Activated naive CD4-positive, alpha-beta T cell treated with anti-CD3 and anti-CD28 coated beads for 36 hours (primary cell): ENCODE measurements at regions of chr17 and their contacts with region 1.

Region 1: GRCh38 chr17:48024937-48025906 is 12.4 kb downstream of the COPZ2 start:
- DNase-seq: peak; percentile 98
- H3K4me3 Mint-ChIP-seq: peak overlapping the region; percentile 81
- H3K27ac Mint-ChIP-seq: no peak overlapping the region
- H3K4me1 Mint-ChIP-seq: peaks cover 23% of the 10 kb centered on the region
- H3K27me3 Mint-ChIP-seq: peaks cover 19% of the 10 kb centered on the region

Region 2: DNA sequence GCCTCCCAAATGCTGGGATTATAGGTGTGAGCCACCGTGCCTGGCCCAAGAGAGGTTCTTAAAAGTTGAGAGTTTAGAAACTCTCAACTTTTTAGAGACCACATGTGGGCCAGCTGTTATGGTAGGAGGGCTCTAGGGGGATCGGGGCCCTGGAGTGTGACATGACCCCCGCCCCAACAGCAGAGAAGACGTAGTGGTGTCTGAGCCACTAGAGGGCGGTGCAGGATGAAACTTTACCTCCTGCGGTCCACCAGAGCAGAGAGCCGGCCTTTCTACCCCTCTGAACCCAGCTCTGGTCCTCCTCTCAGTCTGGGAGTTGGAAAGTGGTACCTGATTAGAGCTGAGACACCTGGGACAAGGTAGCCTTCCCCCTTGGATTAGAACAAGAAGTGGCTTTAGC is 46.9 kb before region 1 on chr17:
- CTCF ChIA-PET with region 1: interaction called, 10 read pairs
- intact Hi-C with region 1: loop called (anchors 1 kb)
- DNase-seq: peak; percentile 60
- H3K4me3 Mint-ChIP-seq: no peak overlapping the region
- H3K27ac Mint-ChIP-seq: no peak overlapping the region
- H3K4me1 Mint-ChIP-seq: peaks cover 1% of the 10 kb centered on the region
- H3K27me3 Mint-ChIP-seq: no peaks in the 10 kb centered on the region

Region 3: GRCh38 chr17:48037036-48037837 is 12.0 kb after region 1 on chr17 and contains the start of gene COPZ2:
- CTCF ChIA-PET with region 1: interaction called, 37 read pairs
- intact Hi-C with region 1: no loop called
- DNase-seq: peak; percentile 75
- H3K4me3 Mint-ChIP-seq: peak within 1 kb of the TSS; percentile 75
- H3K27ac Mint-ChIP-seq: no peak within 1 kb of the TSS
- H3K4me1 Mint-ChIP-seq: peaks cover 7% of the 10 kb centered on the region
- H3K27me3 Mint-ChIP-seq: peaks cover 32% of the 10 kb centered on the region
- total RNA-seq, gene COPZ2: 2.4 to 3.3 TPM

Region 4: DNA sequence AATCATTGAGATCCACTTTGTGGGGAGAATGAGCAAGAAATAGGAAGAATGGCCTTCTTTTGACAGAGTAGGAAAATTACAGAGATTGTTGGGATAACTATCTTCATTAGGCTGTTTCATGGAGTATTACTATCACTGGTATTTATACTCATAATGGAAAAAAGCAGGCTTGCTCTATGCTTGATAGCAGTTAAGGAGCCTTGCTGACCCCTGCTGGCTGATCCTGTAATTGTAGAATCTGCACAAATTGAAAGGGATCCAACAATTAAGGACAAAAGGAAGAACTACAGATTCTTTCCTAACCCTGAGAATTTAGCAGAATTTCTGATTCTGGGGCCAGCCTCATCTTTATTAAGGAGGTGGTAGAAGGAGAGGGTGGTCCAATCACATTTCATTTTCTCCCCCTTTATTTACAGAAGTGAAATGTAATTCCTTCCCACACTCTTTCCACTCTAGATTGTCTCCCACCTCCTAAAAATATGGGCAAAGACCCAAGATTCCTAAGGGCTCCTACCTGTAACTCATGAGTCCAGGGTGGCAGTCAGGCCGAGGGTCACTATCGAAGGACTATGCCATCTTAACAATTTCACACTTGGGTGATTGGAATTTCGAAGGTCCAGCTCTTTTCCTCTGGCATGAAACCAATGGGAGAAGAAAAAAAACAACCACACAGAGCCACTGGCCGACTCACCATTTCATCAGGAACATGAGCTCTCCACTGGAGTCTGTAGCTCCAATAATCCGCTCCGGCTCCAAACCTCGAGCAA is 49.3 kb after region 1 on chr17:
- CTCF ChIA-PET with region 1: interaction called, 67 read pairs
- intact Hi-C with region 1: loop called (anchors 1 kb)
- DNase-seq: peak; percentile 89
- H3K4me3 Mint-ChIP-seq: no peak overlapping the region
- H3K27ac Mint-ChIP-seq: no peak overlapping the region
- H3K4me1 Mint-ChIP-seq: no peaks in the 10 kb centered on the region
- H3K27me3 Mint-ChIP-seq: no peaks in the 10 kb centered on the region

Region 5: DNA sequence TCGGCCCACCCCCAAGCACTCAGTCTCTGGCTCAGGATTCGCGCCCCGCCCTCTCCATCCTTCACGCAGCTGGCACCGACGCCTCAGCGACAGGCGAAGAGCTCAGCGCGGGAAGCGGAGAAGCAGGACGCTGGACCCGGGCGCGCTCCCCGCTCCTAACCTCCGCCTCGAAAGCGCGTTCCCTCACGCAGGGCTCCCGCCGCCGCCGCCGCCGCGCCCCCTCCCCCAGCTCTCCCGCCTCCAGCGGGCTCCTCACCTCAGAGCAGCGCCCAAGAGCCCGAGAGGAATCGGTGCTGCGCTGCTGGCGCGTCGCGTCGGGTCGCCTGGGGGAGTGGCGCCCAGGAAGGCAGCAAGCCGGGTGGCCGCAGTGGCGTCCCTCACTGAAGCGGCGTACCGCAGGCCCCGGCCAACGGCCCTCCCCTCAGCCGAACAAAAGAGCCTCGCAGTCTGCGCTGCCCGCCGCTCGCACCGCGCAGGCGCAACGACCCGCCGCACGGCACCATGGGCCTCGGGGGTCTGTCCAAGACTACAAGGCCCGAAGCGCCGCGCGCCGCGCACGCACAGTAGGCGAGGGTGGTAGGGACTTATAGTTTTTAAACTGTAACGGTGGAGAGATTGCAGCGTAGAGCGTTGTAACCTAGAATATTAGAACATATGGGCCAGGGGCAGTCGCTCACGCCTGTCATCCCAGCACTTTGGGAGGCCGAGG is 75.9 kb after region 1 on chr17 and contains the start of gene CBX1:
- CTCF ChIA-PET with region 1: interaction called, 15 read pairs
- intact Hi-C with region 1: loop called (anchors 2 kb)
- DNase-seq: peak; percentile 95
- H3K4me3 Mint-ChIP-seq: peak within 1 kb of the TSS; percentile 97
- H3K27ac Mint-ChIP-seq: peak within 1 kb of the TSS; percentile 81
- H3K4me1 Mint-ChIP-seq: peaks cover 34% of the 10 kb centered on the region
- H3K27me3 Mint-ChIP-seq: no peaks in the 10 kb centered on the region
- total RNA-seq, gene CBX1: 61.6 to 63.0 TPM

Region 6: GRCh38 chr17:48314716-48315115 is 289.5 kb after region 1 on chr17:
- CTCF ChIA-PET with region 1: no interaction called
- intact Hi-C with region 1: no loop called
- DNase-seq: no peak
- H3K4me3 Mint-ChIP-seq: no peak overlapping the region
- H3K27ac Mint-ChIP-seq: no peak overlapping the region
- H3K4me1 Mint-ChIP-seq: peaks cover 11% of the 10 kb centered on the region
- H3K27me3 Mint-ChIP-seq: no peaks in the 10 kb centered on the region

Region 7: DNA sequence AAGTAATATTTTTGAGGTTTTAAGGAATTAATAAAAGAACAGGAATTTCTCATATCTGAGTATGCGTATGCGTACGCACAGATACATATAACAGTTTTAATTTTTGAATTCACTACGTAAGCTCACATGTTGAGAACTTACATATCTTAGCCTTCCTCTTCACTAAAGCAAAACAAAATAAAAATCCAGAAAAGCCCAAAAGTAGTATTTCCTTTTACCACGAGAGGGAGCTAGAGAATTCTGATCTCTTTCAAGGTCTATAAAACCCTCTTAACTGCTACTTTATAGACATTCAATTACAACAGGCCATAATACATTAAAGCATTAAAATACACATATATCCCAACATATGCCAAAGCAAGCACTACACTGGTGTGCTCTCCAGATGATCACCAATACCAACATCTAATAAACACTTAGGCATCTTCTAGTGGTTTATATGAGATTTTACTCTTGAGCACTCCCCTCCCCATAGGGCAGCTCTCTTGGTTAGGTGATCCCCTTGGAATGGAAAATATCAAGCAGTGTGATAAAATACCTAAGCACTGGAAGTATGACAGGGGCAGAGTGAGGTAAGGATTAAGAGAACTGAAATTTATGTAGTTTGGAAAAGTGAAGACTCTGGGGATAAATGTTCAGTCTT is 310.8 kb after region 1 on chr17:
- CTCF ChIA-PET with region 1: interaction called, 4 read pairs
- intact Hi-C with region 1: loop called (anchors 10 kb)
- DNase-seq: no peak
- H3K4me3 Mint-ChIP-seq: no peak overlapping the region
- H3K27ac Mint-ChIP-seq: no peak overlapping the region
- H3K4me1 Mint-ChIP-seq: peaks cover 6% of the 10 kb centered on the region
- H3K27me3 Mint-ChIP-seq: no peaks in the 10 kb centered on the region

Region 8: GRCh38 chr17:48618256-48618897 is 593.2 kb after region 1 on chr17:
- CTCF ChIA-PET with region 1: no interaction called
- intact Hi-C with region 1: loop called (anchors 2 kb)
- DNase-seq: peak; percentile 88
- H3K4me3 Mint-ChIP-seq: no peak overlapping the region
- H3K27ac Mint-ChIP-seq: no peak overlapping the region
- H3K4me1 Mint-ChIP-seq: peaks cover 40% of the 10 kb centered on the region
- H3K27me3 Mint-ChIP-seq: peaks cover 84% of the 10 kb centered on the region